ENCODE measurements at regions of chr2 and their contacts with region 1.

Region 1: DNA sequence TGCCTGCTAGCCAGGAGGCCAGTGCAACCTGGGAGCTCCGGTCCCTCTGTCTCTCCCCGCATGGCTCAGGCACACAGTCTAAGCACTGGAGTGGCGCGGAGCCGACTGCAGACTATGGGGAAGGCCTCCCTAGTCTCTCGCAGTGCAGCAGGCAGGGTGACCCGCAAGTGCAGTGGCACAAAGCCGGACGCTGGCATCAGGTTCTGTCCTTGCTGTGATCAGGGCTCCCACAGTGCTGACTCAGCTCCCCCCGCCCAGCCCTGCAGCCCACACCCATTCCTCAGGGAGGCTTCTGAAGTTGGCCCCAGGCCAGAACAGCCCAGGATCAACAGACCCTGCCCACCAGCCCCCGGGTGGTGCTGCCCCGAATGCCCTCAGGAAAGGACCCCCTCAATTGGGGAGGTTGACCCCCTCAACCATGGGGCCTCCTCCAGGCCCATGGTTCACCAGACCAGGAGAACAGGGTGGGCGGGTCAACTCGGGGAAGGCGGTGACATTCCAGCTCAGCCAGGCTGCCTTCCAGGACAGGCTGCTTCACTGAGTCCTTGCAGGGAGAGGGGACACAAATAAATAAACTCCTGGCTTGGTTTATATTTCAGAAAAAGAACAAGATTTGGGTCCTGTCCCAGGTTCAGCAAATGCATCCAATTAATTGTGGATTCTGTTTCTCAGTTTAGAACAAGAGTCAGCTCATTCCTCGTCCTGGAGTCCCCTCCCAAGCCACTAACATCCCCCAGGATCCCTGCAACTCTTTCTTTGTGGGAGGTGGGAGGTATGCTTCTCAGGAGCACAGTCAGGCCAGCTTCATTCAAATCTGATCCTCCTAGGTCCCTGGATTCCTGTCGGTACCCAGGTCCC is 12.2 kb downstream of the BIN1 start:
- DNase-seq: peak in 1 of 3 donors; percentile 17
- H3K4me3 ChIP-seq: peak overlapping the region in 1 of 7 experiments; percentile 14
- H3K27ac ChIP-seq: no peak overlapping the region
- H3K4me1 ChIP-seq: peaks cover 6 to 95% (median 71%) of the 10 kb centered on the region in 4 experiments
- H3K27me3 ChIP-seq: no peaks in the 10 kb centered on the region

Region 2: DNA sequence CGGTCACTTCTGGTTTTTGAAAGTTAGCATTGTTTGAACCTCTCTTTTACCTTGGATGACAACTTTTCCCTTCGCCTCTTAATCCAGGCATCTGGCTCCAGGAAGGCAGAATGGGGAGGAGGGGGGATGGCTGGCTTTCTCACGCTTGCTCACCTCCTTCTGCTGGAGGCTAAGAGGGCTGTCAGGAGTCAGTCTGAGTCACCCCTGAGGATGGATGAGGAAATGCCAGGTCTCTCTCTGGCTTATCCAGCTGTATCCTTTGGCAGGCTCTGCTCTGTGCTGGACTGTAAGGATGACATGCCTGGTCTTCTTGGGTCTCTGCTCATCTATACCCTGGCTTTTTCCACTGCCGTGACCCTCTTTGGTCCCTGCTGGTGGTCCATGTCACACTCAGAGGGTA is 581.7 kb before region 1 on chr2:
- CTCF ChIA-PET with region 1: no interaction called
- POLR2A ChIA-PET with region 1: no interaction called
- DNase-seq: no peak
- H3K4me3 ChIP-seq: no peak overlapping the region
- H3K27ac ChIP-seq: no peak overlapping the region
- H3K4me1 ChIP-seq: peaks cover 0 to 3% (median 0%) of the 10 kb centered on the region in 4 experiments
- H3K27me3 ChIP-seq: no peaks in the 10 kb centered on the region

Region 3: DNA sequence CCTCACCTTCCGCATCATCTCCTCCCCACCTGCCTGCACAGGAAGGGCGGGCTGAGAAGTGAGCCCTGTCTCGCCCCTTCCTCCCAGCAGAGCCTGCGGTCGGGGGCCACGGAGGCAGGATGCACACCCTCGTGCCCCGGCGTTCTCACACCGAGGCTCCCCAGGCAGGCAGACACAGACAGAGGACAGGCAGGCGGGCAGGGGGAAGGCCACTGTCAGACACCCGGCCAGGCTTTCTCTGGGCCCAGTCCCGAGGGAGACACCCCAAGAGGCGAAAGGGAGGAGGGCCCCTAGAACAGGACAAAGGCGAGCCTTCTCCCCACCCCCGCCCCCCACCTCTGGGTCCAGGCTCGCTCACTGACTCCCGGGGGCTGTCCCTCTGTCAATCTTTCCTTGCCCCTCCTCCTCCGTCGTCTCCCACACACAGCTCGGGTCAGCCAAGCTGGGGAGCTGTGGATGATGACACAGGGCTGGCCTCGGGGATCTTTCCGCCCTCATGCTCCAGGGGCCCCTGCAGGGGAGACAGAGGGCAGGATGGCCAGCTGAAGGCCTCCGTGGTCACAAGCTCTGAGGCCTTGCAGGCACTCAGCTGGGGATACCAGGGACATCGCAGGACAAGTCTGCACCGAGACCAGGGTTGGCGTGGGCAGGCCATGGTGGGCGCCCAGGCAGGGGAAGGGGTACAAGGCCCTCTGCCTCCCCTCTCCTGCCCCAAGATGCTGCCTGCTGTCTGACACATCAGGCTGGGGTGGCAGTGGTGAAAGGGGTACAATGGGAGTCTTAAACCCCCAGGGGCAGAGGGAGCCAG is 12.7 kb before region 1 on chr2:
- CTCF ChIA-PET with region 1: interaction called, 404 read pairs
- POLR2A ChIA-PET with region 1: interaction called, 3 read pairs
- DNase-seq: peak; percentile 59 to 93 (median 86)
- H3K4me3 ChIP-seq: peak overlapping the region in 5 of 7 experiments; percentile 30 to 66 (median 55)
- H3K27ac ChIP-seq: peak overlapping the region; percentile 56 to 77
- H3K4me1 ChIP-seq: peaks cover 10 to 97% (median 86%) of the 10 kb centered on the region in 4 experiments
- H3K27me3 ChIP-seq: no peaks in the 10 kb centered on the region

Measured in common myeloid progenitor, CD34-positive (primary cell).